Colonic mucosa (tissue), 4 donors: ENCODE measurements at regions of chr3 and their contacts with region 1.

Region 1: GRCh38 chr3:53375019-53375418 is 27.7 kb upstream of the DCP1A start:
- DNase-seq: peak; percentile 76
- H3K4me3 ChIP-seq: no peak overlapping the region
- H3K27ac ChIP-seq: no peak overlapping the region
- H3K4me1 ChIP-seq: no peaks in the 10 kb centered on the region
- H3K27me3 ChIP-seq: no peaks in the 10 kb centered on the region
- CTCF ChIP-seq: peak; percentile 70

Region 2: DNA sequence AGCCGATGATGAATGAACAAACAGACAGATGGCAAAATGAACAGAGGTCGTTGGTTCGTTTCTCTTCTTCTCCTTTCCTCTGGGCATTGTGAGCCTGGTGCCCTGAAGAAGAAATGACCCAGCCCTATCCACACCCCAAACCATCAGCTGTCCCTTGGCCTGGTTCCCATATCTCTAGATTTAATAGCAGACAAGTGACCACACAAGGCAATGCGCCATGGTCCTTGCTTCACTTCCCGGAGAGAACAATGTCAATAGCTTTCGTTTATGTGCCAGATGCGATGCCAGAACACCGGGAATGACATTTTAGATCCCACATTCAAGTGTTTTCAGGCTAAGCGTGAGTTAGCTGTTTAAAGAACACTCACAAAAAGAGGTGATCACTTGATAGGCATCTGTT is 1238.5 kb before region 1 on chr3:
- intact Hi-C with region 1: no loop called
- DNase-seq: no peak
- H3K4me3 ChIP-seq: no peak overlapping the region
- H3K27ac ChIP-seq: no peak overlapping the region
- H3K4me1 ChIP-seq: no peaks in the 10 kb centered on the region
- H3K27me3 ChIP-seq: no peaks in the 10 kb centered on the region
- CTCF ChIP-seq: no peak

Region 3: DNA sequence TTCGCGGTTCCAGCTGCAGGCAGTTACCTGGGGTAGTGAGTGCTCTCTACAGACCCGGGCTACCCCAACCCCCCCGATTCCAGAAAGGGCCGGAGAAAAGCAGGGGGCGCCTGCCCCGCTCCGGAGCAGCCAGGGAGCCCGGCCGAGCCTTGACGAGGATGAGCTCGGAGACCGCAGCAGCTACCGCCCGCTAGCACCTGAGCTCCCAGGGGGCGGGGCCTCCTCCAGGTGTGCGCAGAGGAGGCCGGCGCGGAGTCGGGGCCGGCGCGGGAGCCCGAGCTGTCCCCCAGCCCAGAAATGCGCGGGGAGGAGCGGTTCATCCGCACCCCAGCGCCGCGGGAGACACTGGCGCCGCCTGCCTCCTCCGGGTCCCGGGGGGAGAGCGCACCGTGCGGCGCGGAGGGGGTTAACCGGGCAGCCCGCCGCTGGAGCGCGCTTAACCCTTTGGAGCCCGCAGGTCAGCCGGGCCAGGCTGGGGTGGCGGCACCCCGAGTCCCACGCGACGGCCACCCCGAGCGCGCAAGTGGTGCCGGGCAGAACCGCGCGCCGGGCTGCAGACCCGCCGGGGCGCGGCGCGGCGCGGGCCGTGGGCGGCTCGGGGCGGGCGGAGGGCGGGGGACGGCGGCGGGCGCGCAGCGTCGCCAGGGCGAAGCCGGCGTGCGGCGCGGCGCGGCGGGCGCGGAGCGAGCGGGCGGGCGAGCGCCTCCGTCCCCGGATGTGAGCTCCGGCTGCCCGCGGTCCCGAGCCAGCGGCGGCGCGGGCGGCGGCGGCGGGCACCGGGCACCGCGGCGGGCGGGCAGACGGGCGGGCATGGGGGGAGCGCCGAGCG is 119.2 kb after region 1 on chr3 and contains the start of gene CACNA1D:
- intact Hi-C with region 1: loop called (anchors 10 kb)
- DNase-seq: peak; percentile 80
- H3K4me3 ChIP-seq: peak within 1 kb of the TSS; percentile 59
- H3K27ac ChIP-seq: peak within 1 kb of the TSS; percentile 66
- H3K4me1 ChIP-seq: peaks cover 9% of the 10 kb centered on the region
- H3K27me3 ChIP-seq: peaks cover 7% of the 10 kb centered on the region
- CTCF ChIP-seq: no peak
- total RNA-seq, gene CACNA1D: 9.6 to 17.1 TPM